Kidney (tissue), 22 donors: ENCODE measurements at regions of chr12 and their contacts with region 1.

Region 1: DNA sequence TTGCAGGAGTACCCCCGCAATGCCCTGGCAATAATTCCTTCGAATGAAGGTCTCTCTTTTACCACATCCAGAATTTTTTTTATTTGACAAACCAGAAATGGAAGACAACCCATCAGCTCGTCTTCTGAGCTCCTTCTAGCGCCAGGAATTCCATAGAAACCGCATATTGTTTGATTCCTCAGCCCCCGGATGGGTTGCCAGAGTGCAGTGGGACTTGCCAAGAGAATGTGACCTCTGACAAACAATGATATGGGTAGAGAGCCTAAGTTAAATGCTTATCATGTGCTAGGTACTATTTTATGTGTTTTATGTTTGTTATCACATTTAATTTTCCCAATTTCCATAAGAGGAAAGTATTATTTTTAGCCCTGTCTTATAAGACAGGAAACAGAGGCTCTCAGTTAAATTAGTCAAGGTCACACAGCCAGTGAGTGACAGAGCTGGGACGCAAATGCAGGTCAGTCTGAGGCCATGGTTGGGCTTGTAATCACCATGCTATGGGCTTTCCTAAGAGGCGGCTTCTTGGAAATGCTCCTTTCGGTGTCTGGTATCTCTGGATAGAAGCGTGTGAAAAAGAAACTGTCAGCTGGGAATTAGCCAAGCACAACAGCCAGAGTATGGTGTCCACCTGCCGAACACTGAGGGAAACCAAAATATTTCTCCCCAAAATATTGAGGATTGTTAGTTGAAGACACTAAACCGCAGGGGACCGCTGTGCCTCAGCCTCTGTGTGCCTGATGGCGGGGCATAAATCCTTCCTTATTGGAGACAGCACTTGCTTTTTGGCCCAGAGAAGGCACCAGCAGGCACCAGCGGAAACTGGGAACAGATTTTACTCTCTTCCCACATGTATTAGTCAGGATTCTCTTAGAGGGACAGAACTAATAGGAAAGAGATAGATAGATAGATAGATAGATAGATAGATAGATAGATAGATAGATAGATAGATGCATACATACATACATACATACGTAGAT is 29.4 kb upstream of the ETFBKMT start:
- DNase-seq: peak; percentile 20 to 94 (median 75)
- H3K4me3 ChIP-seq: peak overlapping the region in 2 of 3 donors; percentile 6 to 18
- H3K27ac ChIP-seq: peak overlapping the region in 1 of 2 donors; percentile 53
- H3K4me1 ChIP-seq: peaks cover 3 to 8% (median 4%) of the 10 kb centered on the region in 3 donors
- H3K27me3 ChIP-seq: no peaks in the 10 kb centered on the region
- CTCF ChIP-seq: no peak

Region 2: DNA sequence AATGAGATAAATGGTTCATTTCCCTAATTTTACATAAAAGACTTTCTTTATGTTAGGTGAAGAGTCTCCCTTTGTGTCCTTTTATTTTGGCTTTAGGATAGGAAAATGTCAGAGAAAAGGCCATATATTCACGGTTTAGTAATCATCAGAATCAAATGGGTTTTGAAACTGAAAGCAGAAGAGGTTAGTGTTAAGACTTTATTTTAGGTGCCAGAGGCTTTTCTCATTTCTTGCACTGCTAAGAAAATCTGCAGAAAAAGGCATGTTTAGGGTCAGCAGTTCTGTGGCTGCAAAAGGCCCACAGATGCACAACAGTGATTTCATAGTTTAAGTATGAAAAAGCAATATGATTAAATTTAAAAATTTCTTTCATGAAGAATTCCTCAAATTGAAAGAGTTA is 223.7 kb before region 1 on chr12:
- intact Hi-C with region 1: loop called (anchors 5 kb)
- DNase-seq: no peak
- H3K4me3 ChIP-seq: no peak overlapping the region
- H3K27ac ChIP-seq: no peak overlapping the region
- H3K4me1 ChIP-seq: no peaks in the 10 kb centered on the region
- H3K27me3 ChIP-seq: no peaks in the 10 kb centered on the region
- CTCF ChIP-seq: no peak

Region 3: GRCh38 chr12:31728917-31729640 is 99.0 kb after region 1 on chr12 and contains the start of gene AMN1:
- intact Hi-C with region 1: no loop called
- DNase-seq: peak; percentile 100
- H3K4me3 ChIP-seq: peak within 1 kb of the TSS; percentile 80 to 93 (median 90)
- H3K27ac ChIP-seq: peak within 1 kb of the TSS; percentile 90 to 95
- H3K4me1 ChIP-seq: peaks cover 5 to 14% (median 7%) of the 10 kb centered on the region in 3 donors
- H3K27me3 ChIP-seq: no peaks in the 10 kb centered on the region
- CTCF ChIP-seq: peak; percentile 20
- total RNA-seq, gene AMN1: 12.5 TPM

Region 4: GRCh38 chr12:32211066-32211899 is 581.2 kb after region 1 on chr12:
- intact Hi-C with region 1: no loop called
- DNase-seq: no peak
- H3K4me3 ChIP-seq: no peak overlapping the region
- H3K27ac ChIP-seq: no peak overlapping the region
- H3K4me1 ChIP-seq: peaks cover 0 to 2% (median 0%) of the 10 kb centered on the region in 3 donors
- H3K27me3 ChIP-seq: no peaks in the 10 kb centered on the region
- CTCF ChIP-seq: no peak